ENCODE measurements at regions of chr17 and their contacts with region 1.

Region 1: DNA sequence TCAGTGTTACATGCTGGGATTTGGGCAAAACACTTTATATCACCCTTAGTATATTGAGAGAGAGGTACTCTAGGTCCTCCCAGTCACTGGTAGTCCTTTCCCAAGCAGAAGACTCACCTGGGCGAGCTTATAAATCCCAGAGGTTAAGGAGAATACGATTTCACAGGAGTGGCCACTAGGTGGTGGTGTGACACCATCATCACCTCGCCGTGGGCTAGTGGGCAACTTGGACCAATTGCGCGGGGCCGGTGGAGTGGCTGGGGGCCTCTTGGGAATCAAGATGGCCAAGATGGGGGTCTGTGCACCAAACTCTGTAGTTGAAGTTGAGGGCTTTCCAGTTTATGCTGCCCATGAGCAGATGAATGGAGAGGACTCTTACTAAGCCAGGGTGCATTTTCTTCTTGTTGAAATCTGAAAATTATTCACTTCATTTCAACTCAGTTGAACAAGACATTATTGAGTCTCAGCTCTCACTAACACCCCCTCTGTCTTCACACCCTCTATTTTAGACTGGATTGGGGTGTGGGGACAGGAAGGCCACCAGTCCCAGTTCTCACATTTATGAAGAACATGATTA is 38.2 kb upstream of the PIRT start:
- DNase-seq: peak; percentile 41
- H3K4me3 ChIP-seq: no peak overlapping the region
- H3K27ac ChIP-seq: no peak overlapping the region
- H3K4me1 ChIP-seq: no peaks in the 10 kb centered on the region
- CTCF ChIP-seq: peak; percentile 78

Region 2: GRCh38 chr17:10857976-10858375 is 18.1 kb before region 1 on chr17:
- CTCF ChIA-PET with region 1: no interaction called
- POLR2A ChIA-PET with region 1: no interaction called
- intact Hi-C with region 1: no loop called
- DNase-seq: no peak
- H3K4me3 ChIP-seq: no peak overlapping the region
- H3K27ac ChIP-seq: no peak overlapping the region
- H3K4me1 ChIP-seq: no peaks in the 10 kb centered on the region
- CTCF ChIP-seq: no peak

Region 3: DNA sequence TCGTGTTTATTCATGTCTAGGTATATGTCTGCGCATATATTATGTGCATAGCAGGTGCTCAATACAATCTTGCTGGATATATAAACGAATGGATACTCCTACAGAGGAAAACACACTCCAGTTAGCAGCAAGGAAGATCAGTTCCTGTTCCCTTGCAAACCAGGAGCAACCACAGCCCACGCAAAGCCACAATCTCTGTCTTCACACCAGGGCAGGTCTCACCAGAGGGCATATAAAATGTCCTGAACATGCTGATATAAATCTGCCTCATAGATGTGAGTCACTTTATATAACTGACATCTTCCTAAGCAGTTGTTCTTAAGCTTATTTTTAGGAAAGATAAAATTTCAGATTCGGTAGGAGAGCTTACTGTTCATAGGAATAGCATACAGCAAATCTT is 63.3 kb after region 1 on chr17:
- CTCF ChIA-PET with region 1: no interaction called
- POLR2A ChIA-PET with region 1: no interaction called
- intact Hi-C with region 1: no loop called
- DNase-seq: no peak
- H3K4me3 ChIP-seq: no peak overlapping the region
- H3K27ac ChIP-seq: no peak overlapping the region
- H3K4me1 ChIP-seq: no peaks in the 10 kb centered on the region
- CTCF ChIP-seq: no peak

Region 4: GRCh38 chr17:10976401-10976800 is 100.3 kb after region 1 on chr17:
- CTCF ChIA-PET with region 1: no interaction called
- POLR2A ChIA-PET with region 1: no interaction called
- intact Hi-C with region 1: no loop called
- DNase-seq: no peak
- H3K4me3 ChIP-seq: no peak overlapping the region
- H3K27ac ChIP-seq: no peak overlapping the region
- H3K4me1 ChIP-seq: no peaks in the 10 kb centered on the region
- CTCF ChIP-seq: no peak

Region 5: DNA sequence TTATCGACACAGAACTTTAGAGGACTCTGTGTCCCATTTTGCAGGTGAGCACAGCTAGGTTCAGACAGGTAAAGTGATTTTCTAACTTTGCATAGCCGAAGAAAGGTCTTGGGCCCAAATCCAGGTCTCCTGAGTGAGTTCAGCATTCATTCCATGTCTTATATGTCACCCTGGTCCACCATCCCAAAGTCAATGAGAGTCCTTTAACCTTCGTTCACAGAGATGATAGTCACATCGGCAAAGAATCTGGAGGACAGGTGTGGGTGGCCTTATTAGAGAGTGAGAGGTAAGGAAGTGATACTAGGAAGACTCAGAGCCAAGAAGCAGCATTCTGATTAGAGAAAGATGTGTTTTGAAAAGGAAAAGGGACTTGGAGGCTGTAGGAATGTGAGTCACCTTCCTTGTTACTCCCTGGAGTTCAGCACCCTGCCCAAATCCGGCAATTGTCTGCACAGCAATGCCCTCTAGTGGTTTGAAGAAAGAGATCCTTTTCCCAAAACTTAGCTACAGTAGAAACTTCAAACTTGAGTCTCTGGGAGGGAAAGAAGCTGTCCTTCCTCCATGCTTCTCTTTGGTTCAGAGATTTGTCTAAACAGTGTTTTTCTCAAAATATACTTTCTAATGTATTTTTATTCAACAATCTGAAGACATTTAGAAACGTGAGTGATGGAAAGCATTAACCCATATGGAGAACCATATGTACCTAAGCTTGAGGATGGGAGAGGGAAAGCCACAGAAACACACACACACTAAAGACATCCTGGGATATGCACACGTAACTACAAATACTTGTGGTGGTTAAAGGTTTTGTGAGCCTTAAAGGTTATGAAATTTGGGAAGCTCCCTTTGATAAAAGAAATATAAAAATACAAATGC is 268.5 kb after region 1 on chr17:
- CTCF ChIA-PET with region 1: interaction called, 3 read pairs
- POLR2A ChIA-PET with region 1: no interaction called
- intact Hi-C with region 1: loop called (anchors 5 kb)
- DNase-seq: peak; percentile 12
- H3K4me3 ChIP-seq: no peak overlapping the region
- H3K27ac ChIP-seq: no peak overlapping the region
- H3K4me1 ChIP-seq: no peaks in the 10 kb centered on the region
- CTCF ChIP-seq: peak; percentile 81

Region 6: DNA sequence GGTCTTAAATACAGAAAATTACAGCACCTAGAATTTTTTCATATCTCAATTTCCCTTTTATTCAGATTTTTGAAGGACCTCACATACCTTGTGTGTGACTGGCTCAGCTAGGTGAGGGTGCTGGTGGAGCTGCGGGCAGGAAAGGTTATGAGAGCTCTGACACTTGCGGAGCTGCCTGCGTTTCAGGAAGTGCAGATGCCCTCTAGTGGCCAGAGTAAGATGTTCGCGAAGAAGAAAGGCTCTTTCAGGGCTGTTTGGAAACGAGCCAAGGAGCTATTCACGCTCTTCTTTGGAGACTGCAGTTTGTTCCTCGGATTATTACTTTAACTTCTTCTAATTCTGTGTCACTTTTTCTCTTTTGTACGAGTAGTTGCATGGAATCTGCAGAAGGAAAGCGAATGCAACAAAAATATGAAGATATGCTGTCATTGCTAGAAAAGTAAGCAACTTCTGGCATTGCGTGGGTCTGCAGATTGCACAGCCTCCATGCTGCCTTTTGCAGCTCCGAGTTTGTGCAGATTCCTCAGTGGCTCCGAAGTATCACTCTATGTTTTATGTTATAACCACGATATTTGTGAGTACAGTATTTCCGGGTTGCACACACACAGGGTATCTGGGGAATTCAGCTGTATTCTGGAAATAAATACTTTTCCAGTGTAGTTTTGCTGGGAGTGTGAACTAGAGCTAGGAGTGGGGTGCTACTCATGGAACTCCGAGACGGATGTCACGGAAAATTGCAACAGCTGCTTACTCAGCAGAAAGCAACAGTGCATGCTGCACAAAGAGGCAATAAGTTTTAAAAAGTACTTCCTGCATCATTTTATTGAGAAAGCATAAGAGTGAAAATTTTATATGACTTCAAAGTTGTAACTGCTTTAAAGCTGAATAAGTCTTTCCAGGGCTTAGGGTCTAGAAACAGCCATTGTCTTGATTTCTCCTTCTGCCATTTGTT is 768.5 kb after region 1 on chr17:
- CTCF ChIA-PET with region 1: no interaction called
- POLR2A ChIA-PET with region 1: no interaction called
- intact Hi-C with region 1: loop called (anchors 5 kb)
- DNase-seq: peak; percentile 68
- H3K4me3 ChIP-seq: no peak overlapping the region
- H3K27ac ChIP-seq: no peak overlapping the region
- H3K4me1 ChIP-seq: no peaks in the 10 kb centered on the region
- CTCF ChIP-seq: peak; percentile 91

Region 7: DNA sequence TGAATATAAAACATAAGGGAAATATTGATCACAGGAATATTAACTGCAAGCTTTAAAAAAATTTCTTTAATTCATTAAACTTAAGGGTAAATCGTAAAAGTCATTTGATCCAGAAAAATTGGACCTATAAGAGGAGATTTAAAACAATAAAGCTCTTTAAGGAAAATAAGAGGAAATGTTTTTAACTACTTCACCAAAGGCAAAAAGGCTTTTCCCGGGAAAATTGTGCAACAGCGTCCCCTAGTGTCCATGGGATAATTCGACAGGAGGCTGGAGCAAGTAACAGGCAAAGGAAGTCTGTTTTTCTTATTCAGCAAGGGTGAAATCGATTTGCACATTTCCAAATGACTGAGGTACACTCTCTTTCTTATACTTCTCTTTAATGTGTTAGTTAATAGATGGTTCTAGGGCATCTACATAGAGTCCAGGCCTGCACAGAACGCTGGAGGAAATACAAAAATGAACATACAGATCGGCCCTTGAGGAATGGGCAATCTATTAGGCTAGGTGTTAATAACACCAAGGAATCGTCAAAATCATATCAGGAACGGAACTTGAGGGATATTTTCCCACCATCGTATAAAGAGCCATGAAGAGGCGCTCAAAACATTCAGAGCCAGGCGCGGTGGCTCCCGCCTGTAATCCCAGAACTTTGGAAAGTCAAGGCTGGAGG is 1059.8 kb after region 1 on chr17:
- CTCF ChIA-PET with region 1: no interaction called
- POLR2A ChIA-PET with region 1: no interaction called
- intact Hi-C with region 1: loop called (anchors 5 kb)
- DNase-seq: peak; percentile 41
- H3K4me3 ChIP-seq: no peak overlapping the region
- H3K27ac ChIP-seq: no peak overlapping the region
- H3K4me1 ChIP-seq: no peaks in the 10 kb centered on the region
- CTCF ChIP-seq: peak; percentile 96

Measured in OCI-LY7 (cell line).